ENCODE measurements at regions of chr17 and their contacts with region 1.

Region 1: DNA sequence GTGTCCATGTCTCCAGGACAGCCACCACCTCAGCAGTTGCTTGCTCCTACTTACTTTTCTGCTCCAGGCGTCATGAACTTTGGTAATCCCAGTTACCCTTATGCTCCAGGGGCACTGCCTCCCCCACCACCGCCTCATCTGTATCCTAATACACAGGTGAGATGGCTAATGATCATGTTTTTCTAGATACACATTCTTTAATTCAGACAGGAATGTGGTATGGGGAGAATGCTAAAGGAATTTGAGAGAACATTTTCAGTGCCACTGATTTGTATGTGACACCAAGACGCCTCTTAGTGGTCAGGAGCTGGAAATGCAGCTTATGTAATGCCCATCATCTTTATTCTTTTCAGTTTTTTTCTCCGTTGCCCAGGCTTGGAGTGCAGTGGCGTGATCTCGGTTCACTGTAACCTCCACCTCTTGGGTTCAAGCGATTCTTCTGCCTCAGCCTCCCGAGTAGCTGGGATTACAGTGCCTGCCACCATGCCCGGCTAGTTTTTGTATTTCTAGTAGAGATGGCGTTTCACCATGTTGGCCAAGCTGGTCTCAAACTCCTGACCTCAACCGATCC is 8.9 kb upstream of the RAPGEFL1 start:
- DNase-seq: peak; percentile 26
- H3K4me3 ChIP-seq: no peak overlapping the region
- CTCF ChIP-seq: peak; percentile 55

Region 2: GRCh38 chr17:39393736-39394135 is 774.6 kb before region 1 on chr17:
- CTCF ChIA-PET with region 1: no interaction called
- POLR2A ChIA-PET with region 1: no interaction called
- DNase-seq: no peak
- H3K4me3 ChIP-seq: no peak overlapping the region
- CTCF ChIP-seq: no peak

Region 3: GRCh38 chr17:40015005-40015997 is 153.0 kb before region 1 on chr17 and contains the start of gene CSF3:
- CTCF ChIA-PET with region 1: interaction called, 29 read pairs
- POLR2A ChIA-PET with region 1: no interaction called
- DNase-seq: no peak
- H3K4me3 ChIP-seq: no peak within 1 kb of the TSS
- CTCF ChIP-seq: no peak

Region 4: DNA sequence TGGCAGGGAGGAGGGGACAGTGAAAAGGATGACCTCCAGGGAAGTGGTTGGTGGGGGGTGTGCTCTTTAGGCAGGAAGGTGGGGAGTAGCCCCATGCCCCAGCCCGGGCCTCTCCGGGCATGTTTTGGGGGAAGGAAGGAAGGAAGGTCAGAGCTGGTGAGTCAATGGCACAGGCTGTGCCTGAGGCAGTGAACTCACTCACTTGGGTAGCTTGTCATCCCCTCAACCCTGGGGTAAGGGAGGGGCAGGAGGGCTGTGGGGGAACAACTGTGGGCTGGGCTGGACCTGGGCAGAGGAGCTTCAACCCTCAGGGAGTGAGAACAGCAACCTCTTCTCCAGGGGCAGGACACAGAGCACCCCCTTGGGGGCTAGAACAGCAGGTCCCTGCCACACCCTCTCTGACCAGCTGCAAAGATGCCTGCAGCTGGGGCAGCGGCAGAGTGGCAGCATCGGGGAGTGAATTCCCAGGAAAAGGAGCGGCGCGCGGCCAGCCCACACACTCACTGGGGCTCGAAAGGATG is 146.8 kb before region 1 on chr17:
- CTCF ChIA-PET with region 1: interaction called, 18 read pairs
- POLR2A ChIA-PET with region 1: no interaction called
- DNase-seq: no peak
- H3K4me3 ChIP-seq: no peak overlapping the region
- CTCF ChIP-seq: no peak

Region 5: DNA sequence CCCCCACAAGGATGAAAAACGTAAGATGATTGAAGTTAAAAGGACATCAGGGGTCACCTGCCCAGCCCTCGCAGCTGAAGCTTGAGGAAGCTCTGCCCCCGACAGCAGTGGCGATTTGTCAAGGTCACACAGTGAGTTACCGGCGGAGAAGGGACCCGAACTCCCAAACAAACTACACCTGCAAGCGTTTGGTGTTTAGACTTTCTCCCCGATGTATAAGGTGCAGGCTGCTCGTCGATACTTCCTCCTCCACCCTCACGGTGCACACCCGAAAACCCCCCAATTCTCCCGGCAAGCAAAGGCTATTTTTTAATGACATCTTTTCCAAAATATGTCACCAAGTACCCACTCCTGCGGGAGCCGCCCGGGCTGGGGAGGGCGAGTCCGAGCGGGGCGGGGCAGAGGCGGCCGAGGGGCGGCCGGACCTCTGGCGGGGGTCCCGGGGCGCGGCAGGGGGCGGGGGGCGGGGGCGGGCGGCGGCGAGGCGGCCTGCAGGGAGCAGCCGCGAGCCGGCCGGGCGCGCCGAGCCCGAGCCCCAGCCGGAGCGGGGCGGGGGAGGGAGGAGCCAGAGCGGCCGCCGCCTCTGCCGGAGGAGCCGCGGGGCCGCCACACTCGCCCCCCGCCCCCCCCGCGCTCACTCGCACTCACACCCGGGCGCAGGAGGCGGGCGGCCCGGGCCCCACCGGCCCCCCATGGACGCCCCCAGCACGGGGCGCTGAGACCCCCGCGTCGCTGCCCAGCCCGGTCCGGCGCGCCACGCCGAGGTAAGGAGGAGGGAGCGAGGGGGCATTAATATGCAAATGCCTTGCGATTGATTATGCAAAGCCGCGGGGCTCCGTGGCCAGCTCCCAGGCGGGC is 105.8 kb before region 1 on chr17 and contains the start of gene THRA:
- CTCF ChIA-PET with region 1: interaction called, 21 read pairs
- POLR2A ChIA-PET with region 1: no interaction called
- DNase-seq: no peak
- H3K4me3 ChIP-seq: peak within 1 kb of the TSS; percentile 90
- CTCF ChIP-seq: no peak

Region 6: GRCh38 chr17:40121181-40122135 is 46.9 kb before region 1 on chr17 and contains the start of gene MSL1:
- CTCF ChIA-PET with region 1: interaction called, 10 read pairs
- POLR2A ChIA-PET with region 1: no interaction called
- DNase-seq: no peak
- H3K4me3 ChIP-seq: peak within 1 kb of the TSS; percentile 92
- CTCF ChIP-seq: no peak

Region 7: GRCh38 chr17:40157973-40158372 is 10.4 kb before region 1 on chr17:
- CTCF ChIA-PET with region 1: interaction called, 45 read pairs
- POLR2A ChIA-PET with region 1: interaction called, 4 read pairs
- DNase-seq: no peak
- H3K4me3 ChIP-seq: no peak overlapping the region
- CTCF ChIP-seq: no peak

Region 8: GRCh38 chr17:40191237-40192208 is 23.2 kb after region 1 on chr17:
- CTCF ChIA-PET with region 1: interaction called, 76 read pairs
- POLR2A ChIA-PET with region 1: no interaction called
- DNase-seq: no peak
- H3K4me3 ChIP-seq: peak overlapping the region; percentile 66
- CTCF ChIP-seq: peak; percentile 89

Region 9: DNA sequence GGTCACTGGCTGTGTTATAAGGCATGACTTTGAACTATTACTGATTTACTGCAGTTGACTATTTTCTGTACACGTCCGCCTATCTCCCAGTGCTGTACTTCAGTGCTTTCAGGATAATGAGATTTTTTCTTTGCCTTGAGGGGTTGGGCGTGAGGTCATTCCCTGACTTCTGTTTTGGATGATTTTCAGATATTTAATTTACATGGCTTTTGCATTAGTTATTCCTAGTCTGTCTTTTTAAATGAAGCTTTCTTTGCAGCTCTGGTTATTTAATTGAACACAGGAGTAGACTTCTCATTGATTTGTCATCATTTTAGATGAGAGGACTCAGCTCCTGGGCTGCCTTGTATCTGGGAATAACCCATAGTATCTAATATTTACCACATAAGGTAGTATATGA is 74.4 kb after region 1 on chr17:
- CTCF ChIA-PET with region 1: no interaction called
- POLR2A ChIA-PET with region 1: no interaction called
- DNase-seq: no peak
- H3K4me3 ChIP-seq: no peak overlapping the region
- CTCF ChIP-seq: no peak

Region 10: GRCh38 chr17:40399185-40399584 is 230.8 kb after region 1 on chr17:
- CTCF ChIA-PET with region 1: no interaction called
- POLR2A ChIA-PET with region 1: no interaction called
- DNase-seq: peak; percentile 12
- H3K4me3 ChIP-seq: no peak overlapping the region
- CTCF ChIP-seq: peak; percentile 21

Measured in AG04449 (cell line).